Posterior cingulate gyrus (tissue), 11 donors: ENCODE measurements at regions of chr20 and their contacts with region 1.

Region 1: GRCh38 chr20:266596-267562 is 9.4 kb downstream of the DEFB132 start:
- DNase-seq: peak; percentile 66 to 97 (median 86)

Region 2: DNA sequence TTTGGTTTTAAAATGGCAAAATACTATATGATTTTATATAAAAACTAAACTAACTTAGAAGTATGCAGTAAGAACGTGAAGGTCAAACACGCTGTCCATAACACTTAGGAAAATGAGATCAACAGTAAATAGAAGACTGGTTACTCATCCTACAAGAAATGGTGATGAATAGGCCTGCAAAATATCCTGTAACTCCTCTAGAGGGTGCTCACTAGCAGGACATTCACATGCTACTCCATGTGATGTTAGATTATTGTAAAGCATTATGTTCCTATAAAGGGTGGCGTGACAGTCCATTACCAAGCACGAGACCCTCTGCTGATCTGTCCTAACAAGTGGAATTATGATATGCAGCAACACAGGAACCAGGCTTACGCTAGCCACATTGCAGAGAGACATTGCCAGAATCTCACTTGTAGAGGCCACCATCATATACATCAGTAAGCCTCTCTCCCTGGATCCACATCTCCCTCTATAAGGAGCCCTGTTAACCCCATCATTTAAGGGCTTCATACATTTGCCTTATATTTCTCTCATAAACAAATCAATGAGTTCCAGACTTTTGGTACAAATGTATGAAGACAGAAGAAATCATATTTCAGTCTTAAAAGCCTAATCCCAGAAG is 57.8 kb before region 1 on chr20:
- intact Hi-C with region 1: loop called (anchors 2 kb)
- DNase-seq: no peak

Region 3: GRCh38 chr20:330233-331149 is 63.6 kb after region 1 on chr20:
- intact Hi-C with region 1: loop called (anchors 2 kb)
- DNase-seq: peak in 7 of 10 donors; percentile 26 to 93 (median 64)